B cell (primary cell): ENCODE measurements at regions of chr6 and their contacts with region 1.

Region 1: GRCh38 chr6:73580247-73581149 is 59.7 kb upstream of the EEF1A1 start:
- DNase-seq: peak; percentile 80
- ATAC-seq: peak; percentile 79
- H3K4me3 ChIP-seq: peak overlapping the region in 4 of 5 experiments; percentile 31 to 55 (median 46)
- H3K4me3 Mint-ChIP-seq: peak overlapping the region; percentile 87
- H3K27ac ChIP-seq: peak overlapping the region; percentile 91 to 93
- H3K27ac Mint-ChIP-seq: peak overlapping the region; percentile 96
- H3K4me1 ChIP-seq: peaks cover 32 to 34% of the 10 kb centered on the region in 2 donors
- H3K4me1 Mint-ChIP-seq: peaks cover 32% of the 10 kb centered on the region
- H3K27me3 ChIP-seq: no peaks in the 10 kb centered on the region
- H3K27me3 Mint-ChIP-seq: no peaks in the 10 kb centered on the region
- CTCF ChIP-seq: peak; percentile 24

Region 2: DNA sequence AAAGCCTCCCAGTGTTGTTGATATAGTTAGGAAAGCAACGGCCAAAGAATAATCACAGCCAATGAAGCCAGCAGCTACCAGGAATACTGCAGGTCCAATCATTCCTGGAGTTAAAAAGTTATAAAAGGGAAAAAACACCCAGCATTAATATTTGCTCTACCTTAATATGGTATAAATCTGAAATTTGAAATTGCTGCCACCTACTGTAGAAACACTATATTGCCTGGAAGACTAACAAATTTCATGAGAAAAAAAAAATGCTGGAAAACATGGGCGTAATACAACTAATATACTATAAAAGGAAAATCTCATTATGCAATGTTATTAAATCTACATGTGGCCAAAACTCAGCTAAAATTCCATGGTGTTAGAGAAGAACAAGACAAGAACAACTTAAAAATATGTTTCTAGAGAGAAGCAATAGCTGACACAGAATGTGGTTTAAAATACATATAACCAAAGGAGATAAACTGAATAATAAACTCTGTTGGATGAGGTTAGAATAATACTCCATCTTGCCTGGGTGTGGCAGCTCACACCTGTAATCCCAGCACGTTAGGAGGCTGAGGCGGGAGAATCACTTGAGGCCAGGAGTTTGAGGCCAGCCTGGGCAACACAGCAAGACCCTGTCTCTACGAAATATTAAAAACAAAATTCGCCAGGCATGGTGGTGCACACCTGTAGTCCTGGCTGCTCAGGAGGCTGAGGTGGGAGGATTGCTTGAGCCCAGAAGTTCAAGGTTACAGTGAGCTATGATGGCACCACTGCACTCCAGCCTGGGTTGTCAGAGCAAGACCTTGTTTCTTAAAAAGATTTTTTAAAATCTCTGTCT is 30.2 kb after region 1 on chr6:
- CTCF ChIA-PET with region 1: interaction called, 20 read pairs
- POLR2A ChIA-PET with region 1: interaction called, 11 read pairs
- intact Hi-C with region 1: no loop called
- DNase-seq: peak; percentile 73
- ATAC-seq: peak; percentile 63
- H3K4me3 ChIP-seq: no peak overlapping the region
- H3K4me3 Mint-ChIP-seq: no peak overlapping the region
- H3K27ac ChIP-seq: no peak overlapping the region
- H3K27ac Mint-ChIP-seq: no peak overlapping the region
- H3K4me1 ChIP-seq: peaks cover 0 to 5% of the 10 kb centered on the region in 2 donors
- H3K4me1 Mint-ChIP-seq: peaks cover 5% of the 10 kb centered on the region
- H3K27me3 ChIP-seq: no peaks in the 10 kb centered on the region
- H3K27me3 Mint-ChIP-seq: no peaks in the 10 kb centered on the region
- CTCF ChIP-seq: peak; percentile 81